ENCODE measurements at regions of chr1 and their contacts with region 1.

Region 1: DNA sequence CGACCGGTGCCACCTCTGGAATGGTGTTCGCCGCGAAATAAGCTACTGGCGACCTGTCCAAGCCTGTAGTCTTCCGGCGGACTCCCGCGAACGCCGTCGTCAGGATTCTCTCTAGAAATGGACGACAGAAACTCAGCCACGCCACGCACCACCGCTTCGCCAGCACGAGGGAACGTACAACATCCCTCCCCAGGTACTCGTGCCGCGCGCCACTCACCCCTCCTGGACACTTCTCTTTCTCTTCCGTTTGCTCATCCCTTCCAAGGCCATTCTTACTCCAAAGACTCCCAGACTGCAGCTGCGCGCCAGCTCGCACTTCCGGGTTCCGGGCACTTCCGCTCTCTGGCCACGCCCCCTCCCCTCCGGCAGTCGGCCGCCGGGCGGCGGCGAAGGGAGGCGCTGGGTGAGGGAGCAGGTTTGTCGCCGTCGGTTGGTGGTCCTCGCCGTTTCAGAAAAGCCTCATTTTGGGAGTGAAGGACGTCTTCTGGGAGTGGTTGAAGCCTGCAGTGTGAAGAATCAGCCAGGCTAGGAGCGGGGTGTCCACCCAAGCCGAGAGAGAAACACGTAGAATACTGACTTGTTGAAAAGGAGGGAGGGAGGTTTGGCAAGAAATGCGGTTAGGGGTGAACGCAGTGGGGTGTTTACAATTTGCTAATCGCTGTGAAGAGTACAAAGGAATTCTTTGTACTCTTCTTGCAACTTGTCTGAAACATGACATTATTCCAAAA is at the start of gene RBM34:
- H3K4me3 ChIP-seq: peak within 1 kb of the TSS; percentile 74
- H3K27ac ChIP-seq: peak within 1 kb of the TSS; percentile 77
- H3K4me1 ChIP-seq: no peaks in the 10 kb centered on the region
- CTCF ChIP-seq: peak; percentile 74; the same call in 1 of the 2 replicates

Region 2: GRCh38 chr1:235113183-235113917 is 47.8 kb before region 1 on chr1:
- CTCF ChIA-PET with region 1: no interaction called
- POLR2A ChIA-PET with region 1: interaction called, 14 read pairs
- H3K4me3 ChIP-seq: no peak overlapping the region
- H3K27ac ChIP-seq: no peak overlapping the region
- H3K4me1 ChIP-seq: no peaks in the 10 kb centered on the region
- CTCF ChIP-seq: no peak

Region 3: GRCh38 chr1:235128456-235129328 is 32.4 kb before region 1 on chr1 and contains the start of gene TOMM20:
- CTCF ChIA-PET with region 1: interaction called, 4 read pairs
- POLR2A ChIA-PET with region 1: interaction called, 19 read pairs
- H3K4me3 ChIP-seq: peak within 1 kb of the TSS; percentile 59
- H3K27ac ChIP-seq: peak within 1 kb of the TSS; percentile 91
- H3K4me1 ChIP-seq: peaks cover 2% of the 10 kb centered on the region; the same call in 1 of the 2 replicates
- CTCF ChIP-seq: peak; percentile 86

Region 4: DNA sequence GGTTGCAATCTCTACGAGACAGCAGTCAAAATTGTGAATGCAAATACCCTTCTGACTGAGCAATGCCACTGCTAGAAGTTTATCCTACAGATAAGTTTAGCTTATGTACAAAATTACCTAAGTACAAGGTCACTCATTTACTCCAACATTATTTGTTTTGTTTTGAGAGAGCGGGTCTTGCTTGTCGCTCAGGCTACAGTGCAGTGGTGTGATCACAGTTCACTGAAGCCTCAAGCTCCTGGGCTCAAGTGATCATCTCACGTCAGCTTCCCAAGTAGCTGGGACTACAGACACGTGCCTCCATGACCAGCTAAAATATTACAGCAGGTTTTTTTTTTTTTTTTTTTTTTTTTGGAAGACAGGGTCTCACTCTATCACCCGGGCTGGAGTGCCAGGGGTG is 15.5 kb before region 1 on chr1:
- CTCF ChIA-PET with region 1: interaction called, 5 read pairs
- POLR2A ChIA-PET with region 1: interaction called, 16 read pairs
- H3K4me3 ChIP-seq: no peak overlapping the region
- H3K27ac ChIP-seq: no peak overlapping the region
- H3K4me1 ChIP-seq: no peaks in the 10 kb centered on the region
- CTCF ChIP-seq: no peak

Region 5: GRCh38 chr1:235367000-235367908 is 206.1 kb after region 1 on chr1 and contains the start of gene TBCE:
- CTCF ChIA-PET with region 1: no interaction called
- POLR2A ChIA-PET with region 1: interaction called, 11 read pairs
- H3K4me3 ChIP-seq: peak within 1 kb of the TSS; percentile 90
- H3K27ac ChIP-seq: peak within 1 kb of the TSS; percentile 74
- H3K4me1 ChIP-seq: 0 out of 2 replicates have a peak, but pooled peaks cover 4% of the 10 kb centered on the region
- CTCF ChIP-seq: peak; percentile 56; the same call in 1 of the 2 replicates